ENCODE measurements at regions of chr16 and their contacts with region 1.

Region 1: DNA sequence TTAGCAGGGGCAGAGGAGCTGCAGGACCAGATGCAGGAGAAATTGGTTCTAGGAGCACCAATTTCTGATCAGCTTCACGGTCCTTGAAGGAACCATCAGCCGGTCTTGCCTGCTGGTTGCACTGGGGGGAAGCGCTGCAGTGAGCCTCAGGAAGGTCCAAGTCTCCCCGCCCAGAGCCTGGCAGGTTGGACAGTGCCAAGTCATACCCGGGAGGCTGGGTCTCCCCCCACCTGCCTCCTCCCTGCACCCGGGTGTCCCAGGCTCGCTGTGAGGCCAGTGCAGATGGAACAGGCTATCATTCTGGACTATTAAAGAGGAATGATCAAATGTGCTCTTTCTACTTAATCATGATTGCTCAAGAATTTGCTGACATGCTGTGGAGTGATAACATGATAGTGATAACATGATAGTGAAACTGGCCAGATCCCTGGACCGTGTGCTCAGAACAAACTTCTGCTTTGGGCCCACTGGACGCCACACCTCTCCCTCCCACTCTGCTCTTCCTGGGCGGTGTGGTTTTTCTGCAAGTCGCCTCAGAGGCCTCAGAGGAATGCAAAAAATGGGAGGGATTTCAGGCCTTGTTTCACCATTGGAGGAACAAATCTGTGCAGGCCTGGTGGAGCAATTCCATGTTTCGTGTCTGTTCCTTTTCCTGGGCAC is 236.0 kb downstream of the IRF8 start:
- DNase-seq: peak; percentile 41
- ATAC-seq: peak; percentile 88
- H3K4me3 ChIP-seq: no peak overlapping the region
- H3K27ac ChIP-seq: no peak overlapping the region
- H3K4me1 ChIP-seq: peaks cover 3% of the 10 kb centered on the region; the same call in 1 of the 2 replicates
- H3K27me3 ChIP-seq: no peaks in the 10 kb centered on the region; the same call in 1 of the 2 replicates
- CTCF ChIP-seq: no peak
- POLR2A ChIP-seq: no peak
- RAD21 ChIP-seq: no peak

Region 2: GRCh38 chr16:86222965-86223551 is 88.1 kb after region 1 on chr16:
- CTCF ChIA-PET with region 1: no interaction called
- POLR2A ChIA-PET with region 1: no interaction called
- dilution Hi-C with region 1: no loop called
- in situ Hi-C with region 1: no loop called
- intact Hi-C with region 1: no loop called
- DNase-seq: peak; percentile 98
- ATAC-seq: peak; percentile 64
- H3K4me3 ChIP-seq: peak overlapping the region; percentile 52
- H3K27ac ChIP-seq: peak overlapping the region; percentile 99
- H3K4me1 ChIP-seq: peaks cover 33% of the 10 kb centered on the region
- H3K27me3 ChIP-seq: no peaks in the 10 kb centered on the region
- CTCF ChIP-seq: no peak
- POLR2A ChIP-seq: peak; percentile 84; the same call in 1 of the 2 replicates
- RAD21 ChIP-seq: peak; percentile 2; the same call in 1 of the 2 replicates

Region 3: GRCh38 chr16:86319585-86320270 is 184.8 kb after region 1 on chr16:
- CTCF ChIA-PET with region 1: no interaction called
- POLR2A ChIA-PET with region 1: interaction called, 14 read pairs
- dilution Hi-C with region 1: no loop called
- in situ Hi-C with region 1: no loop called
- intact Hi-C with region 1: no loop called
- DNase-seq: peak; percentile 38
- ATAC-seq: peak; percentile 49
- H3K4me3 ChIP-seq: no peak overlapping the region
- H3K27ac ChIP-seq: no peak overlapping the region
- H3K4me1 ChIP-seq: peaks cover 9% of the 10 kb centered on the region
- H3K27me3 ChIP-seq: peaks cover 6% of the 10 kb centered on the region; the same call in 1 of the 2 replicates
- CTCF ChIP-seq: no peak
- POLR2A ChIP-seq: no peak
- RAD21 ChIP-seq: no peak

Measured in IMR-90 (cell line).